ENCODE measurements at regions of chr1 and their contacts with region 1.

Region 1: DNA sequence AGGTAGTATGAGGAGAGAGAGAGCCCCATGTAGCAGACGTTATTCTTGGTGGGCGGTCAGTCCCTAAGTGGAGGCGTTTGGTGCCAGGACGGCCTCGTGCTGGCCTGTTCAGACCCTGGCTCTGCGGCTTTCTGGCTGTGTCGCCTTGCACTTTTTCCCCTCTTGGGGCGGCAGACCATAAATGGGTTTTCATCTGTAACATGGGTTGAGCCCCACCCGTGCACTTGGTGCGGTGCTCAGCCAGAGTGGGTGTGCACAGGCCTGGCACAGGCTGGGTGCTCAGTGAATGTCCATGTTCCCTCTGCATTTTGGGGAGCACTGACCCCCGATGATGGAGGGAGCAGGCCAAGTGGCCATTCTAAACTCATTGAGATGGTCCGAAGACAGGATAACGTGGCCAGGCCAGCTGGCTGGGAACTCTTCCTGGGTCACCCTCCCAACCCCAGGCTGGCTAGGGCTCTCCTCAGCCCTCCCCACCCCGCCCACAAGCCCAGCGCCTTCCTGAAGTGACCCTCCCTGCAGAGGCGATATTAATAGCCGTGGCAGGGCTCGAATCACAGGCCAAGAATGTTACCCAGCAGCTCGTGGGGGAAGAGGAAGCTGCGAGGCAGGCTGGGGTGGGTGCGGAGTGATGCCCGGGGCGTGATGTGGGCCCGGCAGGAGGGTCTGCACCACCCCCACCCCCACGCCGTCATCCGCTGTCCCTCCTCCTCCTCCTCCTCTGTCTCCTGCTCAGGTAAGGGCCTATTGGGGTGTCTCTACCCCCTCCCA is 78.5 kb downstream of the ARHGEF10L start:
- H3K4me3 Mint-ChIP-seq: peak overlapping the region; percentile 83
- H3K27ac Mint-ChIP-seq: peak overlapping the region; percentile 93
- H3K4me1 Mint-ChIP-seq: peaks cover 89% of the 10 kb centered on the region
- H3K27me3 Mint-ChIP-seq: peaks cover 2% of the 10 kb centered on the region

Region 2: GRCh38 chr1:17439250-17440073 is 178.5 kb before region 1 on chr1 and contains the start of gene RCC2:
- intact Hi-C with region 1: loop called (anchors 10 kb)
- H3K4me3 Mint-ChIP-seq: peak within 1 kb of the TSS; percentile 95
- H3K27ac Mint-ChIP-seq: peak within 1 kb of the TSS; percentile 99
- H3K4me1 Mint-ChIP-seq: peaks cover 43% of the 10 kb centered on the region
- H3K27me3 Mint-ChIP-seq: peaks cover 24% of the 10 kb centered on the region

Region 3: DNA sequence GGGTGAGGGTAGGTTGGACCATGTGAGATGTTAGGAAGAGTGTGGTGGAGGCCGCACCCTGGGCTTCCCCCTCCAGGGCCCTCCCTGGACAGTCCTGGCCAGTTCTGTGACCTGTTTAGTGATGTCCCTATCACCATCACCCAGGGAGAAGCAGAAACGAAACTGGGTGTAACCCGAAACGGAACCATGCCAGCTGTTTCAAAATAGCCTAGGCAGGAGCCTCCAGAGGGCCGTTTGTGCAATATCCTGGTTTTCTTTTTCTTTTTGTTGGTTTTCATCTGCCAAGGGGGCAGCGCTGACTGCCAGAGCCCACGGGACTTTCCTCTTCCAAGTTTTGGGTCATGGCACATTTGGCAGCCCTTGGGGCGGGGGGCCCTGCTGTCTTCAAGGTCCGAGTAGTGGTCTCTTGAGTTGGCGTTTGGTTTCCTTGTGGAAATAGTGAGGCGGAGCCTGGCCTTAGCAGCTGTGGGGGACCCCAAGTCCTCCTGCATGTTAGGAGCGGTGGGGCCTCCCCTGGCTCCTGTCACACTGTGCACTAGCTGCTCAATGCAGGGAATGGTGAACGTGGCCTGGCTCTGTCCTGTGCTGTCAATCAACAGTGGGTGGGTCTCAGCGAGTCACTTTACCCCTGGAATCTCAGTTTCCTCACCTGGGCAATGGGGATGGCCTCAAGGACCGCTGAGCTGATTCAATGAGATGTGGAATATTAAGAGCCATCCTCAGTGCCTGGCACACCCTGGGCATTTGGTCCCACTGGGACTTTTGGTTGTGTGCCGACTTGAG is 12.3 kb after region 1 on chr1:
- intact Hi-C with region 1: loop called (anchors 1 kb)
- H3K4me3 Mint-ChIP-seq: peak overlapping the region; percentile 74
- H3K27ac Mint-ChIP-seq: peak overlapping the region; percentile 98
- H3K4me1 Mint-ChIP-seq: peaks cover 99% of the 10 kb centered on the region
- H3K27me3 Mint-ChIP-seq: no peaks in the 10 kb centered on the region

Region 4: DNA sequence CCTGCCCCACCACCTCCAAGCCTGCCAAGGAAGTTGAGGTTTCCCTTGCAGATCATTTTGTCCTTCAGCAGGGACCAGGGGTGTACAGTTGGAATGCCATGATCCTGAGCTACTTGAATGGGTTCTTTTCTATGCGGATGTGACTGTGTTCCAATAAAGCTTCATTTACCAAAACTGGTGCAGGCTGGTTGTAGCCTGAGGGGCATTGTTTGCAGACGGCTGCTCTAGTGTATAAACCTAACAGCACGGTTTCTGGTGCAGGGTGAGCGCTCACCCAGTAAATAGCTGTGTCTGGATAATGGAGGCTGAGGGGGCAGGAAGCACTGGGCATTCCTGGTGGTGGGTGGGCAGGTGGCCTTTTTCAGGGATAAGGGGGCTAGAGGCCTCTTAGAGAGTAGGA is 64.4 kb after region 1 on chr1:
- intact Hi-C with region 1: no loop called
- H3K4me3 Mint-ChIP-seq: no peak overlapping the region
- H3K27ac Mint-ChIP-seq: no peak overlapping the region
- H3K4me1 Mint-ChIP-seq: peaks cover 49% of the 10 kb centered on the region
- H3K27me3 Mint-ChIP-seq: no peaks in the 10 kb centered on the region

Region 5: GRCh38 chr1:17719874-17720273 is 101.9 kb after region 1 on chr1:
- intact Hi-C with region 1: no loop called
- H3K4me3 Mint-ChIP-seq: no peak overlapping the region
- H3K27ac Mint-ChIP-seq: no peak overlapping the region
- H3K4me1 Mint-ChIP-seq: no peaks in the 10 kb centered on the region
- H3K27me3 Mint-ChIP-seq: peaks cover 20% of the 10 kb centered on the region

Measured in dendritic cell treated with granulocyte-macrophage colony-stimulating factor and Interleukin-4, amounts not matched to agents 40 ng/mL and 50 ng/mL, for 4 days (primary cell).